ENCODE measurements at regions of chr17 and their contacts with region 1.

Region 1: DNA sequence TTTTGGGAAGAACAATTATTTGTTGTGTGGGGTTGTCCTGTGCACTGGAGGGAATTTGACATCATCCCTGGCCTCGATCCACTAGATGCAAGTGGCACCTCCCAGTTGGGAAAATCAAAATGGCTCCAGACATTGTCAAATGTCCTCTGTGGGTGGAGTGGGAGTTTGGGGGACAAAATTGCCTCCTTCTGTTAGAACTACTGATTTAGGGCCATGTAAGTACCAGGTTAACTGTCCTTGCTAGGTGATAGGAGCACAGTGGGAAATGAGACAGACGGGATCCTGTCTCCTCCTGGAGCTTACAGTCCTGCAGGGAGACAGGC is 56.8 kb downstream of the ARHGAP23 start:
- DNase-seq: no peak
- H3K4me3 ChIP-seq: no peak overlapping the region
- H3K27ac ChIP-seq: peak overlapping the region in 3 of 4 donors; percentile 19 to 71 (median 36)
- H3K4me1 ChIP-seq: peaks cover 2 to 7% (median 4%) of the 10 kb centered on the region in 4 donors
- H3K27me3 ChIP-seq: no peaks in the 10 kb centered on the region
- CTCF ChIP-seq: peak in 1 of 5 experiments; percentile 4
- EP300 ChIP-seq: no peak
- POLR2A ChIP-seq: no peak

Region 2: GRCh38 chr17:38428112-38428642 is 56.9 kb before region 1 on chr17 and contains the start of gene ARHGAP23:
- in situ Hi-C with region 1: loop called in 1 of 4 experiments (anchors 5 kb)
- intact Hi-C with region 1: loop called (anchors 5 kb)
- DNase-seq: peak; percentile 62
- H3K4me3 ChIP-seq: peak within 1 kb of the TSS; percentile 62 to 84 (median 76)
- H3K27ac ChIP-seq: peak within 1 kb of the TSS; percentile 84 to 96 (median 90)
- H3K4me1 ChIP-seq: peaks cover 9 to 28% (median 20%) of the 10 kb centered on the region in 4 donors
- H3K27me3 ChIP-seq: peaks cover 8% of the 10 kb centered on the region
- CTCF ChIP-seq: no peak
- EP300 ChIP-seq: no peak
- POLR2A ChIP-seq: peak; percentile 13
- total RNA-seq, gene ARHGAP23: 4.5 to 21.7 (median 17.0) TPM

Region 3: GRCh38 chr17:38444151-38444550 is 41.0 kb before region 1 on chr17:
- in situ Hi-C with region 1: no loop called
- intact Hi-C with region 1: loop called (anchors 5 kb)
- DNase-seq: peak; percentile 61
- H3K4me3 ChIP-seq: no peak overlapping the region
- H3K27ac ChIP-seq: peak overlapping the region in 2 of 4 donors; percentile 14 to 25
- H3K4me1 ChIP-seq: peaks cover 3 to 28% (median 18%) of the 10 kb centered on the region in 4 donors
- H3K27me3 ChIP-seq: no peaks in the 10 kb centered on the region
- CTCF ChIP-seq: peak; percentile 68 to 85 (median 76)
- EP300 ChIP-seq: no peak
- POLR2A ChIP-seq: no peak